Activated T-helper 1 cell treated with anti-CD3 and anti-CD28 coated beads, Interleukin-12 subunit alpha, Interleukin-12 subunit beta, Interleukin-2, Interleukin-4 antibody, amounts not matched to agents 30 ng/mL and 10 ng/mL and 1 ng/mL, durations not matched to agents 14 hours and 24 hours and 36 hours (primary cell): ENCODE measurements at regions of chr17 and their contacts with region 1.

Region 1: DNA sequence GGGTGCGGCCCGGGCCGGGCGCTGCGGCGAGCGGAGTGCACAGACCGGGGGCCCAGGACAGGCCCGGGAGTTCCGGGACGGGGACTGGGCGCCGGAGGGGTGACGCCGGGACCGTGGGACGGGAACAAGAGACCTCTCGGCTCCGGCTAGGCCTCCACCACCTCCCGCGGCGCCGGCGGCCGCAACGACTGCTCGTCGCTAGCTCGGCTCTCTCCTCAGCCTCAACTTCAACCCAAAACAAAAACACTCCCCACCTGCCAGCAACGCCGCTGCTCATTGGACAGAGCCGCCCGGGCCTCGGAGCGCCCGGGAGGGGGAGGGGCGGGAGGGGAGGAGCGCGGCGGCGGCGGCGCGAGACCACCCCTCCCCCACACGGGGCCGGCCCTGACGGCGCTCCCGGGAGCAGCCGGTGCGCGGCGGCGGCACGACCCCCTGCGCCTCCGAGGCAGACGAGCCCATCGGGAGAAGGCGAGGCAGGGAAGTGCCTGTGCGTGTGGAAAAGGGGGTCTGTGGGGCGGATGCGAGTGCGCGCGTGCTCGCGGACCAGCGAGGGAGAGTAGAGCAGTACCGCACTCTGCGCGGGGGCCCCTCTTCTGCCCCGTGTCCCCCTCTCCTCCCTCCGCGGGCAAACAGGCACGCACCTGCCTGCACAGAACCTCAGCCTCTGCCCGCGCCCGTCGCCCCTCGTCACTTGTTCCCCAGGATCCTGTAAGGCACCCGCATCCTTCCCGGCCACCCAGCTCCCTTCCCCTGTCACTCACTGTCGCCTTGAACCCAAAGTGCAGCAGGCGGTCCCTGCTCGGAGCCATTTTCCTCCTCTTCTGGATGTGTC is at the start of gene FBXL20:
- DNase-seq: peak; percentile 84
- H3K4me3 Mint-ChIP-seq: peak within 1 kb of the TSS; percentile 94
- H3K27ac Mint-ChIP-seq: peak within 1 kb of the TSS; percentile 98
- H3K4me1 Mint-ChIP-seq: peaks cover 40% of the 10 kb centered on the region
- H3K27me3 Mint-ChIP-seq: no peaks in the 10 kb centered on the region
- total RNA-seq, gene FBXL20: 20.1 and 25.6 TPM in 2 replicates

Region 2: DNA sequence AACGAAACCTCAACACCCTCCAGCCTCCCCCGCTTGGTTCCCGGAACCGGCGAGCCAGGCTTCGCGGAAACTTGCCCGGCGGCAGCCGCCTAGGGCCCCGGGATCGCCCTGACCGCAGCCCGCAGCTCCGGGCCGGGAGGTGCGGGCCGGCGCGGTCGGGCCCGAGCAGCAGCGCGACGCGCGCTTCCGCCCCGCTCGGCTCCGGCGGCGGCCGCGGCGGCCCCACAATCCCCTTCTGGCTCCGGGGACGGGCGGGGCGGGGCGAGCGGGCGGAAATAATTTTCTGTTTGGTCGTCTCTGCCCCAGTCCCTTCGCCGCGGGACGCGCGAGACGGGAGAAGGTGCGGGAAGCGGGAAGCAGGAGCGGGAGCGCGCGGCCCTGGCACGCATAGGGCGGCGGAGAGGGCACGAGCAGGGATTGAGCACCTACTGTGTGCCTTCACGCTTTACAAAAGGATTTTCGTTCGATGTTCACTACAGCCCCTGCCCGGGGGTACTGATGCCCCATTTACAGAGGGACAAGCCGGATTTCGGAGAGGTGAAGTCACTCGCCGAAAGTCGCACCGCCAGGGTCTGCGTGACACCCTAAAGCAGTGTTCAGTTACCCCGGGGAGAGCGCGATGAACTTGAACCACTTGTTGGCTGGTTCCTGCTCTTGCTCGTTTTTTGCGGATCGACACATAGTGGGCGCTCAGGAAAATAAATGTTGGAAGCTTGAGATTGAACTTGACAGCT is 699.3 kb before region 1 on chr17:
- intact Hi-C with region 1: loop called (anchors 5 kb)
- DNase-seq: peak; percentile 75
- H3K4me3 Mint-ChIP-seq: peak overlapping the region; percentile 97
- H3K27ac Mint-ChIP-seq: peak overlapping the region; percentile 99
- H3K4me1 Mint-ChIP-seq: peaks cover 65% of the 10 kb centered on the region
- H3K27me3 Mint-ChIP-seq: no peaks in the 10 kb centered on the region

Region 3: DNA sequence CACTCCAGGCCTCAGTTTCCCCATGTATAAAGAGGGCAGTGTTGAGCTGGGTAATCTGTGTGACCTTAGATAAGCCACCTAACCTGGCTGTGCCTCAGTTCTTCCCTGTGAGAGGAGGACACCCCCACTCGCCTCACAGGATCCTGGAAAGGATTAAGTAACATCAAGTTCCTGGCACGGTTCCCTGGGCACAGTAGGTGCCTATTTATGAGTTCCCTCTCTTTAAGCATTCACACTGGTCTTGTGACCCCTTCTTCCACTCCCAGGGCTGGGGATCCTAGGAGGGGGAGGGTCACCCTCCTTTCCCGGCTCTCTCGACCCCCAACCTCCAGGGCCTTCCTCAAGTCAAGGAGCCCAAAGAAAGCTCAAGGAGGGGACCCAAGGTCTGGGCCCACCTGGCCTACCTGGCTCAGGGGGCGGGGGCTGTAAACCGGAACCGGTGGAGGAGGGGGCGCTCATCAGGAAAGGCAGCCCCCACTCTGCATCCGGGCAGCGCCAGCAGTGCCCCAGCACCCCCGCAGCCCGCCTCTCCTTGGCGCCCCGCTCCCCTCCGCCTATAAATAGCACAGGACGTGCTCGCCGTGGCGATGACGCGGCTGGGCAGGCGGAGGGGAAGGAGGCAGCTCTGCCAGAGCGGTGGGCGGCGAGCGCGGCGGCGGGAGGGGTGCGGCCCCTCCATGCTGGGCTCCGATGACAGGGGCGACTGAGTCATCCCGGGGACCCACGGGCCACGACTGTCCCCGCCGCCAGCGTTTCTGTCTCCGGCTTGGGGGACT is 192.1 kb before region 1 on chr17:
- intact Hi-C with region 1: loop called (anchors 5 kb)
- DNase-seq: peak; percentile 47
- H3K4me3 Mint-ChIP-seq: peak overlapping the region; percentile 15
- H3K27ac Mint-ChIP-seq: no peak overlapping the region
- H3K4me1 Mint-ChIP-seq: peaks cover 16% of the 10 kb centered on the region
- H3K27me3 Mint-ChIP-seq: peaks cover 12% of the 10 kb centered on the region

Region 4: DNA sequence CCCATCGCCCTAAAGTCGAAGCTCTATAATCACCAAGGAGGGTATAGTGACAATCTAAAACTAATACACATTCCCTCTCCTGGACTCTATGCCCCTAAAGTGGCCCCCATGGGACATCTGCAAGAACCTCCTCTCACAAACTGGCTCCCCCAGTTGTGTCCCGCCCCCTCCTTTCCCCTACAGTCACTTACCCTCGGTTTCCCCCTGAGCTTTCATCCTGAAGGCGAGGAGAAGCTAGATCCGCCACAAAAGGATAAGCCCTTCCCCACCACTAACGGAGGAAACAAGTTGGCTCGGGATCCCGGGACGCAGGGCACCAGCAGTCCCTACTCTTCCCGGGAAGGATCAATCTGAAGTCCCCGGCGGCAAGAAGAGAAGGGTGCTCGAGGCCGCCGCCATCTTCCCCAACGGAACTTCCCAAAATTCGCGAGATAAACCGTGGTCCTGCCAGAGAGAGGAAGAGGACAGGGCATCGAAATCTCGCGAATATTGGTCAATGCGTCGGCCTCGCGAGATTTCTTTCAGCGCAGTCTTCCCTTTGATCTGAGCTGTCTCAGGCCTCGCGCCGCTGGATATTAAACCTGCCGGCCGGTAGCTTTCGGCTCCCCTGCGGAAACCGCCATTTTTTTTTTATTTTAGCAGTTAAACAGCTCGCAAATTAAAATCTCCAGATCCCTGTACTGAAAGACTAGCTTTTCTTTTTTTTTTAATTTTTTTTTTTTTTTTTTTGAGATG is 49.4 kb after region 1 on chr17 and contains the start of gene MED1:
- intact Hi-C with region 1: loop called (anchors 1 kb)
- DNase-seq: peak; percentile 92
- H3K4me3 Mint-ChIP-seq: peak within 1 kb of the TSS; percentile 99
- H3K27ac Mint-ChIP-seq: peak within 1 kb of the TSS; percentile 93
- H3K4me1 Mint-ChIP-seq: peaks cover 25% of the 10 kb centered on the region
- H3K27me3 Mint-ChIP-seq: no peaks in the 10 kb centered on the region
- total RNA-seq, gene MED1: 72.0 and 73.4 TPM in 2 replicates

Region 5: DNA sequence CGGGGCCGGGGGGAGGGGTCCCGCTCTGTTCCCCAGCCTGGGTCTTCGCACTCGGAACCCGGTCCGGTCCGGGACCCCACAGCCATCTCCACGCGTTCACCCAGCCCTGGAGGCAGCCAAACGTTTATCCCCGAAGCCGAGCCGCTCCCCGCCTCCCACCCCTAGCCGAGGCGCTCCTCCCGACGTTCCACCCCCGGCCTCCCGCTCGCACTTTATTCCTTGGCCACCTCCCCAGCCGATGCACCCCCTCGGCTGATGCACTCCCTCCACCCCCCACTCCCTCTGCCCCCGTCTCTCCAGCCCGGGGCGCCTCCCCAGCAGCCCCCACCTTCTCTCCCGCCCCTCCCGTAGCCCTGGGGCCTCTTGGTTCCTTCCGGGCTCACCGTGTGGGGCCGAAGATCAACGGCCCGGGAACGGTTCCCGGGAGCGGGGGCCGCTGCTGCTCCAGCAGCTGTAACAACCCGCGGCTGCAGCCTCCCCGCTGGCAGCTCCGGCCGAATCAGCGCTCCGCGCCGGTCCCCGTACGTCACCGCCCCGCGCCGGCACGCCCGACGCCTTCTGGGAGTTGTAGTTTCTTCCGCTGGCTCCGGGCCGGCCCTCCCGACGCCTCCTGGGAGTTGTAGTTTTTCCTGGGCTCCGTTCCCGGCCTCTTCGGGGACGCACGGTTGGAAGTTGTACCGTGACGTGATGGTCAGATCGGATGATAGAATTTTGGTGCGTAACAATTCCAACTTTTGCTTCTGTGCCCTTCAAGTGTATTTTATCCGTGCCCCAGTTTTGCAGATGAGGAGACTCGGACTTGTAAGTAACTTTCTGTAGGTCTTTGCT is 525.7 kb after region 1 on chr17 and contains the starts of genes LRRC3C and ORMDL3:
- intact Hi-C with region 1: no loop called
- DNase-seq: peak; percentile 91
- H3K4me3 Mint-ChIP-seq: peak within 1 kb of the TSS; percentile 97
- H3K27ac Mint-ChIP-seq: peak within 1 kb of the TSS; percentile 92
- H3K4me1 Mint-ChIP-seq: peaks cover 60% of the 10 kb centered on the region
- H3K27me3 Mint-ChIP-seq: no peaks in the 10 kb centered on the region
- total RNA-seq, gene LRRC3C: not detected in 2 replicates
- total RNA-seq, gene ORMDL3: 70.8 and 77.4 TPM in 2 replicates